ENCODE measurements at regions of chr3 and their contacts with region 1.

Region 1: GRCh38 chr3:15361494-15362212 is 29.3 kb upstream of the SH3BP5 start:
- DNase-seq: no peak
- H3K27ac ChIP-seq: no peak overlapping the region
- CTCF ChIP-seq: no peak

Region 2: DNA sequence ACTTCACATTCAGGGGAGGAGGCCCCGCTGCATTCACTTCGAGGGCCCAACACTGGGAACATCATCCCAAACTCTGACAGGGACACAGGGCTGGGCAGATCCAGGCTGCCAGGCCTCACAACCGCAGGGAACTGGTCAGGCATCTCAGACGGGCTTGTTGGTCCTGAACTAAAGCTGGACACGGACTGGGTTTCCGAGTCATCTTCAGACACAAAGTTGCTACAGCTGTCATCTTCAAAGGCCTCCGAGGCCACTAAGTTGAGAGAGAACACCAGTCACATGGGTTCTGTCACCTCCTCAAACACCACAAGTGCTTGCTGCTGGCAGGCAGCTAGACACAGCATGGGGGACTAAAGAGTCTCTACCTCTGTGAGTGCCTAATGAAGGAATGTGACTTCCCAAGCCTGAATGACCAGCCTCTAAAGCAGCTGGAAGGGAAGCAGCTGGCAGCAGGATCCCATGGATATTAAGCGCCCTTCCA is 104.8 kb before region 1 on chr3:
- CTCF ChIA-PET with region 1: interaction called, 11 read pairs
- POLR2A ChIA-PET with region 1: no interaction called
- DNase-seq: no peak
- H3K27ac ChIP-seq: peak overlapping the region; percentile 18; the same call in 1 of the 2 replicates
- CTCF ChIP-seq: no peak

Region 3: GRCh38 chr3:15325242-15325641 is 36.4 kb before region 1 on chr3:
- CTCF ChIA-PET with region 1: no interaction called
- POLR2A ChIA-PET with region 1: no interaction called
- DNase-seq: no peak
- H3K27ac ChIP-seq: peak overlapping the region; percentile 41
- CTCF ChIP-seq: no peak

Region 4: GRCh38 chr3:15375461-15376000 is 13.9 kb after region 1 on chr3:
- CTCF ChIA-PET with region 1: no interaction called
- POLR2A ChIA-PET with region 1: no interaction called
- DNase-seq: no peak
- H3K27ac ChIP-seq: no peak overlapping the region
- CTCF ChIP-seq: no peak